ENCODE measurements at regions of chr3 and their contacts with region 1.

Region 1: GRCh38 chr3:115692887-115693524 is 69.7 kb downstream of the GAP43 start:
- DNase-seq: peak; percentile 28
- ATAC-seq: peak; percentile 95
- H3K4me3 Mint-ChIP-seq: no peak overlapping the region
- H3K27ac Mint-ChIP-seq: no peak overlapping the region
- H3K4me1 Mint-ChIP-seq: peaks cover 3% of the 10 kb centered on the region
- H3K27me3 Mint-ChIP-seq: no peaks in the 10 kb centered on the region
- CTCF ChIP-seq: no peak

Region 2: GRCh38 chr3:114827495-114827894 is 865.5 kb before region 1 on chr3:
- CTCF ChIA-PET with region 1: interaction called, 10 read pairs
- POLR2A ChIA-PET with region 1: no interaction called
- intact Hi-C with region 1: loop called (anchors 1 kb)
- DNase-seq: no peak
- ATAC-seq: peak; percentile 75
- H3K4me3 Mint-ChIP-seq: no peak overlapping the region
- H3K27ac Mint-ChIP-seq: no peak overlapping the region
- H3K4me1 Mint-ChIP-seq: no peaks in the 10 kb centered on the region
- H3K27me3 Mint-ChIP-seq: no peaks in the 10 kb centered on the region
- CTCF ChIP-seq: no peak

Region 3: GRCh38 chr3:115092220-115092791 is 600.7 kb before region 1 on chr3:
- CTCF ChIA-PET with region 1: interaction called, 36 read pairs
- POLR2A ChIA-PET with region 1: no interaction called
- intact Hi-C with region 1: loop called (anchors 1 kb)
- DNase-seq: no peak
- ATAC-seq: peak; percentile 45
- H3K4me3 Mint-ChIP-seq: no peak overlapping the region
- H3K27ac Mint-ChIP-seq: no peak overlapping the region
- H3K4me1 Mint-ChIP-seq: peaks cover 5% of the 10 kb centered on the region
- H3K27me3 Mint-ChIP-seq: no peaks in the 10 kb centered on the region
- CTCF ChIP-seq: no peak

Region 4: DNA sequence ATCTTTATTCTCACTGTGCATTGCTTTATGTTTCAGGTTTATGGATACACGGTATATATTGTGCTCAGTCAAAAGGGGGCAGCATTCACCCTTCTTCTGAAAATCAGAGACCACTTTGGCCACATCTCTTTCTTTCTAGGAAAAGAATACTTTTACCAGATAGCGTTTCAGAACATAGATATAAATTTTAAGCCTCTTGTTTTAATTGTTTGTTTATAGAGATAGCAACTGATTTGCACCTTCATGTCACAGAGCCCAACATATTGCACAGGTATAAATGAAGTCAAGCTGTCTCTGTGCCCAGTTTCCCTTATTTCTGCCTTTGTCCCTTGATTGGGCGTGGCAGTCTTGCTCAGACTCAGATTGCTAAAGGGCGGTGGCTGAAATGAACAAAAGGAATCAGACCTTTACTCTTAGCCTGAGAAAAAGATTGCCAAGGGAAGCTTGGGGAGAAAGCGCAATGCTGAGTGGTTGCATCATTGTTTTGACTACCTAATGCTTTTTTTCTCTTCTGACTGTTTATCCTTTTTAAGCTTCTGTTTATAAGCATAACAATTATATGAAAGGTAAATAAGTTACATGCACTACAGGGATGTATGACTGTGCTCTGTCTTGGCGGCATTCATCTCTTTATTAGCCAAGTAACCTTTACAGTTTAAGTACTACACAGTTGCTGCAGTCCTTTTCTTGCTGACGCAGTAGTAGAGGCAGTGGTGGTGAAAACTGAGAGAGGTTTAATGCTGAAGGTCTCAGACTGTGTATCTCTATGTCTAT is 475.1 kb before region 1 on chr3:
- CTCF ChIA-PET with region 1: interaction called, 20 read pairs
- POLR2A ChIA-PET with region 1: no interaction called
- intact Hi-C with region 1: loop called (anchors 1 kb)
- DNase-seq: no peak
- ATAC-seq: peak; percentile 50
- H3K4me3 Mint-ChIP-seq: no peak overlapping the region
- H3K27ac Mint-ChIP-seq: no peak overlapping the region
- H3K4me1 Mint-ChIP-seq: peaks cover 3% of the 10 kb centered on the region
- H3K27me3 Mint-ChIP-seq: peaks cover 18% of the 10 kb centered on the region
- CTCF ChIP-seq: no peak

Region 5: GRCh38 chr3:115533218-115533617 is 159.8 kb before region 1 on chr3:
- CTCF ChIA-PET with region 1: no interaction called
- POLR2A ChIA-PET with region 1: no interaction called
- intact Hi-C with region 1: no loop called
- DNase-seq: no peak
- ATAC-seq: no peak
- H3K4me3 Mint-ChIP-seq: no peak overlapping the region
- H3K27ac Mint-ChIP-seq: no peak overlapping the region
- H3K4me1 Mint-ChIP-seq: no peaks in the 10 kb centered on the region
- H3K27me3 Mint-ChIP-seq: peaks cover 17% of the 10 kb centered on the region
- CTCF ChIP-seq: no peak

Region 6: GRCh38 chr3:115819785-115820384 is 126.9 kb after region 1 on chr3:
- CTCF ChIA-PET with region 1: interaction called, 3 read pairs
- POLR2A ChIA-PET with region 1: no interaction called
- intact Hi-C with region 1: loop called (anchors 10 kb)
- DNase-seq: no peak
- ATAC-seq: peak; percentile 90
- H3K4me3 Mint-ChIP-seq: no peak overlapping the region
- H3K27ac Mint-ChIP-seq: no peak overlapping the region
- H3K4me1 Mint-ChIP-seq: no peaks in the 10 kb centered on the region
- H3K27me3 Mint-ChIP-seq: no peaks in the 10 kb centered on the region
- CTCF ChIP-seq: peak; percentile 61